ENCODE measurements at regions of chr4 and their contacts with region 1.

Region 1: GRCh38 chr4:54217642-54218495 is 11.2 kb upstream of the PDGFRA start:
- ATAC-seq: peak; percentile 59 to 99 (median 98)
- H3K4me3 ChIP-seq: peak overlapping the region; percentile 15 to 46 (median 27)
- H3K27ac ChIP-seq: no peak overlapping the region
- H3K4me1 ChIP-seq: no peaks in the 10 kb centered on the region

Region 2: DNA sequence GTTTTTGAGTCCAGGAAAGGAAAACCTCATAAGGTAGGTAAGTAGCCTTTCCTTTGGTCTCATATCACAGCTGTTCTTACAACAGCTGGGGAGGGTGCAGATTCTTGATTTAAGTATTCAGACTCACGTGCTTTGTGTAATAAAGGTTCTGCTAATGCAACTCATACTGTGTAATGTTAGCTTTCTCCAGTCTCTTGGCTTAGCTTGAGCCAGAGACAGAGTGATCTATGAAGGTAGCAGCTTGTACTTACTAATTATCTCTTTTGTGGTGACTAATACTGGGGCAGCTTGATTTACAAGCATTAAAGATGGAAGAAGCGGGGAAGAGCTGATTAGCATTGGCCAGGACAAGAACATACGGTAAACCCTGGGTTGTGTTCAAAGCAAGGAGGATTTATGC is 706.9 kb before region 1 on chr4:
- in situ Hi-C with region 1: no loop called
- ATAC-seq: peak in 7 of 8 experiments; percentile 33 to 90 (median 59)
- H3K4me3 ChIP-seq: no peak overlapping the region
- H3K27ac ChIP-seq: no peak overlapping the region
- H3K4me1 ChIP-seq: no peaks in the 10 kb centered on the region

Region 3: GRCh38 chr4:53702334-53703266 is 515.3 kb before region 1 on chr4:
- in situ Hi-C with region 1: loop called in 1 of 9 experiments (anchors 25 kb)
- ATAC-seq: peak; percentile 80 to 97 (median 88)
- H3K4me3 ChIP-seq: no peak overlapping the region
- H3K27ac ChIP-seq: peak overlapping the region in 1 of 2 donors; percentile 50
- H3K4me1 ChIP-seq: peaks cover 5 to 12% of the 10 kb centered on the region in 2 donors

Region 4: GRCh38 chr4:53908661-53909078 is 309.2 kb before region 1 on chr4:
- in situ Hi-C with region 1: loop called in 6 of 9 experiments (anchors 10 to 25 kb)
- ATAC-seq: peak; percentile 36 to 87 (median 73)
- H3K4me3 ChIP-seq: no peak overlapping the region
- H3K27ac ChIP-seq: no peak overlapping the region
- H3K4me1 ChIP-seq: peaks cover 0 to 8% of the 10 kb centered on the region in 2 donors

Region 5: DNA sequence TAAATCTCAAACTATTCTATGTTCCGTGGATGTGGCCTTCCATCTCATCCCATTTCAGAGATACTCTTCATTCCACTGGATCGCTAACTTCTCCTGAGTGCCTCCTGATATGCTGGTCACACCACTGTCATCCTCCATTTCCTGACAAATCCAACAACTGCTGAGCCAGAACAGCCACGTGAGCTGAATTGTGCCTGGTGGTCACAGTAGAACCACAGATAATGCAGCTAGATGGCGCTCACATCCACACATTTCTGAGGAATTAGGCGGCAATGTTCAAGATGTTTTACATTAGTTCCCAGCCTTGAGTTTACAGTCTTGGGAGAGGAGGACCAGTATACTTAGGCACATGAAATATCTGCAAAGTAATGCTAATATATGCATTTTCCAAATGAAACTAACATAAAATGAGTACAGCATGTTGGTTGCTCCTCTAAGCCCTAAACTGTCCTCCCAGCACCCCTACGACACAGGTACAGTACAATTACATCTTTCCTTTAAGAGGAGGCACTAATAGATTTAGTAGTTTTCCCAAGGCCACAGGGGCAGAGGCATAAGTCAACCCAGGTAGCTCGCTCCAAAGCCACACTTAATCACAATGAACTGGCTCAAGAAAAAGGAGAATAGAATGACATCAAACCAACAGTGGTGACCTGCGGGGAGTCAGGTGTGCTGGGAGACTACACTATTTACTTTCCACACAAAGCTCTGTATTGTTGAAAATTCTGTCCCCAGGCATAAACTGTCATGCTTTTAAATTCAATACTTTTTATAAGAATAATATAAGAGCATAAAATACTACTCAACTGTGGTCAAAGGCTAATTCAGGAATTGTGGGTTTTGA is 287.7 kb before region 1 on chr4:
- in situ Hi-C with region 1: loop called in 2 of 9 experiments (anchors 10 to 25 kb)
- ATAC-seq: peak; percentile 87 to 98 (median 92)
- H3K4me3 ChIP-seq: no peak overlapping the region
- H3K27ac ChIP-seq: no peak overlapping the region
- H3K4me1 ChIP-seq: no peaks in the 10 kb centered on the region

Region 6: DNA sequence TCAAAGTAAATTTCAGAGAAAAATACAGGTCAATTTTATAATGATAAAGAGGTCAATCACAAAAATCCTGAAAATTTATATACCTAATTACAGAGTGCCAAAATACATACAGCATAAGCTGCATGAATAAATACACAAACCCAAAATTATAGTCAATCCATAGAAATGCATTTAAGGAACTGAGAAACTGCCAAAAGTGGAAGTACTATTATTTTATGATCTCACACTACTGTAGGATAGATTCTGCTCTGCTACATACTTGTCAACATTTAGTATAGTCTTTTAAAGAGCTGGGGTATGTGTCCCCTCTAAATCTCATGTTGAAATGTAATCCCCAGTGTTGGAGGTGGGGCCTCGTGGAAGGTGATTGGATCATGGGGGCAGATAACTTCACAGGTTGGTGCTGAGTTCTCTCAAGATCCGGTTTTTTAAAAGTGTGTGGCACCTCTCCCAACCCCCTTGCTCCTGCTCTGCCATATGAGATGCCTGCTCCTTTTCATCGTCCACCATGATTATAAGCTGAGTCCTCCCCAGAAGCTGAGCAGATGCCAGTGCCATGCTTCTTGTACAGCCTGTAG is 185.2 kb before region 1 on chr4:
- in situ Hi-C with region 1: no loop called
- ATAC-seq: no peak
- H3K4me3 ChIP-seq: no peak overlapping the region
- H3K27ac ChIP-seq: no peak overlapping the region
- H3K4me1 ChIP-seq: no peaks in the 10 kb centered on the region

Region 7: GRCh38 chr4:54091637-54092404 is 126.0 kb before region 1 on chr4:
- in situ Hi-C with region 1: loop called in 1 of 9 experiments (anchors 25 kb)
- ATAC-seq: peak; percentile 86 to 99 (median 98)
- H3K4me3 ChIP-seq: peak overlapping the region; percentile 28 to 54 (median 37)
- H3K27ac ChIP-seq: no peak overlapping the region
- H3K4me1 ChIP-seq: peaks cover 2 to 15% of the 10 kb centered on the region in 2 donors

Measured in motor neuron (in vitro differentiated cells).